Activated CD4-positive, alpha-beta T cell treated with anti-CD3 and anti-CD28 coated beads, Interleukin-2, amount 10 ng/mL, durations not matched to agents 24 days and 14 days (primary cell): ENCODE measurements at regions of chr9 and their contacts with region 1.

Region 1: DNA sequence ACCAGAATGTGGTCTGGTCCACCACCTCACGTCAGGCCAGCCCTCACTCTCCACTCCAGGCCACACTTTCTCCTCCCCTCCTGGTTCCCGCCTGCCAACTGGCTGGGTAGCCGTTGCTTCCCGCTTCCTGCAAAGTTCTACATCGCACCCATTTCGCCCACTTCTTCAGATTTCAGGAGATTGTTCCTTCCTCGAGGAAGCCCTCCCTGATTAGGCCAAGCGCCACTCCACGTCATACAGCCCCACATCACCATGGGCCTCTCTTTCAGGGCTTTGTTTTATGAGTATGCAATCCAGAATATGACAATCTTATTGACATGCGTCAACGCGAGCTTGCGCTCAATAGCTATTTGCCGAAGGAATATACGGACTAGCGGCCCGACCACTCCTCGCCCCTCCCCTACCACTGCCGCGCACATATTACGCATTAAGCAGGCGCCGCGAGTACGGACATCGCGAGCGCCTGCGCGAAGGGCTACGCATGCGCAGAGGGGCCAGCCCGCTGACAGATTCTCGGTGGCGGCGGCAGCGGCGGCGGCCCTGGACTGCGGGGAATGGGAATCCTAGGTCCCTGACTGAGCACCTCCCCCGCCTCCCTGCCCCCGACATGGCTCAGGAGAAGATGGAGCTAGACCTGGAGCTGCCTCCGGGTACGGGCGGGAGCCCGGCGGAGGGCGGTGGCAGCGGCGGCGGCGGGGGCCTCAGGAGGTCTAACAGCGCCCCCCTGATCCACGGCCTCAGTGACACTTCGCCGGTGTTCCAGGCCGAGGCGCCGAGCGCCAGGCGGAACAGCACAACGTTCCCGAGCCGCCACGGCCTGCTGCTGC is 74.7 kb downstream of the PIP5K1B start:
- DNase-seq: peak; percentile 98
- H3K4me3 Mint-ChIP-seq: no peak overlapping the region
- H3K27ac Mint-ChIP-seq: no peak overlapping the region
- H3K4me1 Mint-ChIP-seq: peaks cover 10% of the 10 kb centered on the region
- H3K27me3 Mint-ChIP-seq: peaks cover 4% of the 10 kb centered on the region

Region 2: DNA sequence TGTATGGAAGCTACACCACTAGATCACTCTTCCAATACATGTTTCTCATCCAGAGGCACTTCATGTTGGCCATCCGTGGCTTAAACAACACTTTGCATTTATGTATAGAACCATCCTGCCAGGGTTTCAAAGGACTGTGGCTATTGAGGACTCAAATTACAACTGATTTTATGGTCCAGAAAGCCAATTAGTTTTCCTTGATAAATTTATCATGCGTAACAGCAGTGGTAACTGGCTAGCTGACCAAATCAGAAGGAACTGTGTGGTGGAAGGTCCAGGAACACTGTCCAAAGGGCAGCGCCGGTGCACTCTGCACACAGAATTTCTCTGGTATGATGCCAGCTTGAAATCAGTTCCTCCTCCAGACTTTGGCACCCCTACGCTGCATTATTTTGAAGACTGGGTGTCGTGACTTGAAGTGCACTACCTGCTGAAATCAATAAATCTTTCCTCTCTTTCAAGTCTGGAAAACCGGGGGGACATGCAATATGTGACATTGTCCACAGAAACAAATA is 169.8 kb before region 1 on chr9:
- intact Hi-C with region 1: no loop called
- DNase-seq: no peak
- H3K4me3 Mint-ChIP-seq: no peak overlapping the region
- H3K27ac Mint-ChIP-seq: no peak overlapping the region
- H3K4me1 Mint-ChIP-seq: no peaks in the 10 kb centered on the region
- H3K27me3 Mint-ChIP-seq: peaks cover 4% of the 10 kb centered on the region

Region 3: DNA sequence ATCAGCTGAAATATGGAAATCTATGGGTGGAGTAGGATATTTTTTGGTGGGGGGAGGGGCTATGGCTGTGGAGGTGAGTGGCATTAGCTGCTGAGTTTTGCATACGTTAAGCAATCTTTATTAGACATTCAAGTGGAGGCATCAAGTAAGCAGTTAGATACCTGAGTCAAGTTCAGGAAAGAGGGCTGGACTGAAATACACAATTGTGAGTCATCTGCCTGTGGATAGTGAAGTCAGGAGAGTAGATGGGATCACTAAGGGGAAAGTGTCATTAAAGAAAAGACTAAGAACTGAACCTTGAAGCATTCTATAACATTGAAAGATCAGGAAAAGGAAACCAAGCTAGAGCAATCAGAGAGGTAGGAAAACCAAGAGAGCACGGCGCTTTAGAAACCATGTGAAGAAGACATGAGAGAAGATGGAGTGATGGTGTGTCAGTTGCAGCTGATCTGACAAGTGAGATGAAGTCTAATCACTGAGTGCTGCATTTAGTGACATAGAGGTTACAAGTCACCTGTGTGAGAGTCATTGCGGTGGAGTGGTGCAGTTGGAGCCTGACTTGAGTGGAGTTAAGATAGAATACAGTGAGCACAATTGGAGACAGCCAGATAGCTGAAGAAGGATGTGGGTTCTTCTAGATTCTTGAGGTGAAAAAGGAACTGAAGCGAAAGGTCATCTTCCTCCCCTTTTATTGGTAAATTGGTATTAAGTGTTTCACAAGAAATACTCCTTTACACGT is 14.0 kb after region 1 on chr9:
- intact Hi-C with region 1: loop called (anchors 1 kb)
- DNase-seq: peak; percentile 65
- H3K4me3 Mint-ChIP-seq: no peak overlapping the region
- H3K27ac Mint-ChIP-seq: no peak overlapping the region
- H3K4me1 Mint-ChIP-seq: peaks cover 7% of the 10 kb centered on the region
- H3K27me3 Mint-ChIP-seq: peaks cover 1% of the 10 kb centered on the region

Region 4: GRCh38 chr9:68895741-68896478 is 116.1 kb after region 1 on chr9:
- intact Hi-C with region 1: loop called (anchors 5 kb)
- DNase-seq: peak; percentile 75
- H3K4me3 Mint-ChIP-seq: peak overlapping the region; percentile 73
- H3K27ac Mint-ChIP-seq: peak overlapping the region; percentile 82
- H3K4me1 Mint-ChIP-seq: peaks cover 46% of the 10 kb centered on the region
- H3K27me3 Mint-ChIP-seq: no peaks in the 10 kb centered on the region

Region 5: DNA sequence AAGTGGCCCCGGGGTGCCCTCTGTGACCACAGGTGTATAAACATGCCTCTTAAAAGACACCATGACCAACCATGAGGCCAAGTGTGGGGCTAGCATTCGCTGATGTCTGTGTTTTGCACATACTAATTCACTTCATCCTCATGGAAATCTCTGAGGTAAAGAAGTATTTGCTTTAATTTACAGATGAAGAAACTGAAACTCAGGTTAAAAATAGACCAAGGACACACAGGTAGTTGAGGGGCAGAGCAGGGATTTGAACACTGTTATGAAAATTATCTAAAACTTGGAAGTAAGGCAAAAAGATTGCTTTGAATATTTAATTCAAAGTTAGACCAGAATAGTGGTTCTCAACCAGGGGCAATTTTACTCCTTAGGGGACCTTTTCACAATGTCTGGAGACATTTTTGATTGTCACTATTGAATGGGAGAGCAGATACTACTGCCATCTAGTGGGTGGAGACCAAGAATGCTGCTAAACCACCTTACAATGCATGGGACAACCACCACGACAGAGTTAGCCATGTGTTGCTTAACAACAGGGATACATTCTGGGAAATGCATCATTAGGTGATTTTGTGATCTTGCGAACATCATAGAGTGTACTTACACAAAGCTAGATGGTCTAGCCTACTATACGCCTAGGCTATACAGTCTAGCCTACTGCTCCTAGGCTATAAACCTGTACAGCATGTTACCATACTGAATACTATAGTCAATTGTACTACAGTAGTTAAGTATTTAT is 247.8 kb after region 1 on chr9:
- intact Hi-C with region 1: loop called (anchors 5 kb)
- DNase-seq: peak; percentile 84
- H3K4me3 Mint-ChIP-seq: no peak overlapping the region
- H3K27ac Mint-ChIP-seq: no peak overlapping the region
- H3K4me1 Mint-ChIP-seq: peaks cover 44% of the 10 kb centered on the region
- H3K27me3 Mint-ChIP-seq: peaks cover 2% of the 10 kb centered on the region

Region 6: GRCh38 chr9:69085569-69086283 is 306.0 kb after region 1 on chr9:
- intact Hi-C with region 1: no loop called
- DNase-seq: no peak
- H3K4me3 Mint-ChIP-seq: no peak overlapping the region
- H3K27ac Mint-ChIP-seq: no peak overlapping the region
- H3K4me1 Mint-ChIP-seq: no peaks in the 10 kb centered on the region
- H3K27me3 Mint-ChIP-seq: no peaks in the 10 kb centered on the region

Region 7: GRCh38 chr9:69317894-69318293 is 538.1 kb after region 1 on chr9:
- intact Hi-C with region 1: no loop called
- DNase-seq: no peak
- H3K4me3 Mint-ChIP-seq: no peak overlapping the region
- H3K27ac Mint-ChIP-seq: no peak overlapping the region
- H3K4me1 Mint-ChIP-seq: no peaks in the 10 kb centered on the region
- H3K27me3 Mint-ChIP-seq: peaks cover 17% of the 10 kb centered on the region